GM12878 (cell line): ENCODE measurements at regions of chr2 and their contacts with region 1.

Region 1: GRCh38 chr2:70190418-70191243 is at the start of gene C2orf42:
- DNase-seq: peak; percentile 97
- ATAC-seq: peak; percentile 94
- H3K4me3 ChIP-seq: peak within 1 kb of the TSS; percentile 72
- H3K27ac ChIP-seq: peak within 1 kb of the TSS; percentile 88
- H3K4me1 ChIP-seq: no peaks in the 10 kb centered on the region; the same call in 1 of the 2 replicates
- H3K27me3 ChIP-seq: no peaks in the 10 kb centered on the region
- CTCF ChIP-seq: peak; percentile 1 to 14 (median 7); a peak in 2 of 6 replicates
- EP300 ChIP-seq: peak in 1 of 2 experiments; percentile 12; a peak in 1 of 4 replicates
- POLR2A ChIP-seq: peak; percentile 95
- RAD21 ChIP-seq: 0 out of 2 replicates have a peak, but pooled peaks have one; percentile 15
- polyA plus RNA-seq, gene C2orf42: 5.5 to 7.3 TPM

Region 2: GRCh38 chr2:69214898-69215297 is 975.7 kb before region 1 on chr2:
- CTCF ChIA-PET with region 1: no interaction called
- POLR2A ChIA-PET with region 1: no interaction called
- RAD21 ChIA-PET with region 1: no interaction called
- SMC1A ChIA-PET with region 1: no interaction called
- in situ Hi-C with region 1: no loop called
- intact Hi-C with region 1: no loop called
- DNase-seq: no peak
- ATAC-seq: no peak
- H3K4me3 ChIP-seq: no peak overlapping the region
- H3K27ac ChIP-seq: no peak overlapping the region
- H3K4me1 ChIP-seq: no peaks in the 10 kb centered on the region
- H3K27me3 ChIP-seq: peaks cover 3% of the 10 kb centered on the region in 2 experiments; a peak in 3 of 4 replicates
- CTCF ChIP-seq: no peak
- EP300 ChIP-seq: no peak
- POLR2A ChIP-seq: no peak
- RAD21 ChIP-seq: no peak

Region 3: DNA sequence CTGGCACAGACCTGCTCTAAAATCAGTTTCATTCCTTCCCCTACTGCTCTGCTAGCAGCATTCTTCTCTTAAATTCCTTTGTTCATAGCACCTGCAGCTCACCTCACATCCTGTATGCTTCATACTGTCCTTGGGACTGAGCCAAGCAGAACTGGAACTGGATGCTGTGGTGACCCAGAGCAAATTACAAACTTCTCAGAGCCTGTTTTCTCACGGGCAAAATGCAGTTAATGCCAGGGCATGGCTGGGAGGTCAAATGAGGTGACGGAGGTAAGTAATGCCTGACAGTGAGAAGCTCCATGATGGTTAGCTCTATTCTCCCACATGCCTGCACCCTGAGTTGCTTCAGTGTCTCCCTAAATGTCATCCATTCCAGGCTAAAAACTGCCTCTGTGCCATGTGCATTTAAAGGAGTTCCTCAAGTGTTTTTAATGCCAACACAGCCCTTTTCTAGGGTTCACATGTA is 29.5 kb before region 1 on chr2:
- CTCF ChIA-PET with region 1: interaction called, 6 read pairs
- POLR2A ChIA-PET with region 1: interaction called, 26 read pairs
- RAD21 ChIA-PET with region 1: interaction called, 23 read pairs
- SMC1A ChIA-PET with region 1: interaction called, 25 read pairs
- in situ Hi-C with region 1: no loop called
- intact Hi-C with region 1: loop called (anchors 1 kb)
- DNase-seq: peak; percentile 99
- ATAC-seq: peak; percentile 95
- H3K4me3 ChIP-seq: no peak overlapping the region; the same call in 1 of the 2 replicates
- H3K27ac ChIP-seq: peak overlapping the region; percentile 78
- H3K4me1 ChIP-seq: peaks cover 18% of the 10 kb centered on the region
- H3K27me3 ChIP-seq: no peaks in the 10 kb centered on the region
- CTCF ChIP-seq: no peak
- EP300 ChIP-seq: peak; percentile 56 to 86; a peak in 3 of 4 replicates
- POLR2A ChIP-seq: no peak
- RAD21 ChIP-seq: no peak

Region 4: GRCh38 chr2:70248181-70248847 is 57.7 kb after region 1 on chr2 and contains the start of gene TIA1:
- CTCF ChIA-PET with region 1: interaction called, 3 read pairs
- POLR2A ChIA-PET with region 1: interaction called, 8 read pairs
- RAD21 ChIA-PET with region 1: interaction called, 4 read pairs
- SMC1A ChIA-PET with region 1: interaction called, 4 read pairs
- in situ Hi-C with region 1: no loop called
- intact Hi-C with region 1: loop called (anchors 2 kb)
- DNase-seq: peak; percentile 96
- ATAC-seq: peak; percentile 97
- H3K4me3 ChIP-seq: peak within 1 kb of the TSS; percentile 97
- H3K27ac ChIP-seq: peak within 1 kb of the TSS; percentile 96
- H3K4me1 ChIP-seq: no peaks in the 10 kb centered on the region
- H3K27me3 ChIP-seq: no peaks in the 10 kb centered on the region
- CTCF ChIP-seq: no peak
- EP300 ChIP-seq: no peak
- POLR2A ChIP-seq: peak; percentile 89
- RAD21 ChIP-seq: no peak
- polyA plus RNA-seq, gene TIA1: 21.5 to 23.2 TPM